GM12878 (cell line): ENCODE measurements at regions of chr3 and their contacts with region 1.

Region 1: GRCh38 chr3:118801899-118802298 is 232.7 kb downstream of the IGSF11 start:
- DNase-seq: no peak
- ATAC-seq: no peak
- H3K4me3 ChIP-seq: no peak overlapping the region
- H3K27ac ChIP-seq: no peak overlapping the region
- H3K4me1 ChIP-seq: no peaks in the 10 kb centered on the region; the same call in 1 of the 2 replicates
- H3K27me3 ChIP-seq: no peaks in the 10 kb centered on the region
- CTCF ChIP-seq: no peak
- EP300 ChIP-seq: no peak
- POLR2A ChIP-seq: no peak
- RAD21 ChIP-seq: no peak

Region 2: GRCh38 chr3:118760585-118761290 is 41.2 kb before region 1 on chr3:
- CTCF ChIA-PET with region 1: interaction called, 5 read pairs
- POLR2A ChIA-PET with region 1: interaction called, 4 read pairs
- RAD21 ChIA-PET with region 1: interaction called, 12 read pairs
- SMC1A ChIA-PET with region 1: interaction called, 42 read pairs
- in situ Hi-C with region 1: no loop called
- intact Hi-C with region 1: no loop called
- DNase-seq: no peak
- ATAC-seq: peak; percentile 84
- H3K4me3 ChIP-seq: no peak overlapping the region
- H3K27ac ChIP-seq: no peak overlapping the region
- H3K4me1 ChIP-seq: no peaks in the 10 kb centered on the region
- H3K27me3 ChIP-seq: no peaks in the 10 kb centered on the region
- CTCF ChIP-seq: peak in 2 of 3 experiments; percentile 35 to 58; a peak in 3 of 6 replicates
- EP300 ChIP-seq: no peak
- POLR2A ChIP-seq: no peak
- RAD21 ChIP-seq: peak; percentile 44; the same call in 1 of the 2 replicates

Region 3: DNA sequence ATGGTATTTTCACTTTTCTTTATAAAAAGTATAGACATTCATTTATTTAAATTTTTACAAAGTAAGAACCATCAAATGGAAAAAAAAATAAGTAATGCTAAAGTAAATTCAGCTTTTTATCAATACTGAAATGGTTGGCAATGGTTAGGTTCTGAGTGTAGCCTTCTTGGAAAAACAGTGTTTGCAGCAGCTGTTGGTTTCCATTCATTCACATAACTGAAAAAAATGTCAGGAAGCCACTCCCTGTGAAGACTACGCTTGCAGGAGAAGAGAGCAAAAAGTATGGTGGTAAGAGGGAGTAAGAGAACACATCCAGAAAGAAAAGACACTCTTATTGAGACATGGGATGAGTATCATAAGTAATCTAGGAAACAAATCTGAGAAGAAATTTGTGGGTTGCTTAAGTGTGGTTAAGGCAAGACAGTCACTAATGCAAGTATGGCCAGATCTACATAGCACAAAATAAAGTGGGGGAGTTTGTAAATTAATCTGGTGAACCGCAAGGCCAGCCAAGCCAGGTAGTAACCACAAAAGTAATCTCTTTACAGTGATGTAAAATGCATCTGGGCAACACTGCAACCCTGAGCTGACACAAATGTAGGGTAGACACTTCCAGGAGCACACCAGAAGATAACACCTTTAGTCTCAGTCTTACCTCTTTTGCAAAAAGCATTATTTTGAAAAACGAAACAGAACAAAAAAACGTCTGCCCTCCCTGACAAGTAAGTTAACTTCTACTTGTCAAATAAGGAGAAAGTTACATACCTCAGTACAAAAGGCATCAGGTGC is 99.0 kb after region 1 on chr3:
- CTCF ChIA-PET with region 1: no interaction called
- POLR2A ChIA-PET with region 1: no interaction called
- RAD21 ChIA-PET with region 1: no interaction called
- SMC1A ChIA-PET with region 1: no interaction called
- in situ Hi-C with region 1: no loop called
- intact Hi-C with region 1: no loop called
- DNase-seq: no peak
- ATAC-seq: peak; percentile 31
- H3K4me3 ChIP-seq: no peak overlapping the region
- H3K27ac ChIP-seq: no peak overlapping the region
- H3K4me1 ChIP-seq: no peaks in the 10 kb centered on the region
- H3K27me3 ChIP-seq: peaks cover 2% of the 10 kb centered on the region in 2 experiments; a peak in 1 of 4 replicates
- CTCF ChIP-seq: no peak
- EP300 ChIP-seq: no peak
- POLR2A ChIP-seq: no peak
- RAD21 ChIP-seq: no peak